T-cell (primary cell): ENCODE measurements at regions of chr9 and their contacts with region 1.

Region 1: DNA sequence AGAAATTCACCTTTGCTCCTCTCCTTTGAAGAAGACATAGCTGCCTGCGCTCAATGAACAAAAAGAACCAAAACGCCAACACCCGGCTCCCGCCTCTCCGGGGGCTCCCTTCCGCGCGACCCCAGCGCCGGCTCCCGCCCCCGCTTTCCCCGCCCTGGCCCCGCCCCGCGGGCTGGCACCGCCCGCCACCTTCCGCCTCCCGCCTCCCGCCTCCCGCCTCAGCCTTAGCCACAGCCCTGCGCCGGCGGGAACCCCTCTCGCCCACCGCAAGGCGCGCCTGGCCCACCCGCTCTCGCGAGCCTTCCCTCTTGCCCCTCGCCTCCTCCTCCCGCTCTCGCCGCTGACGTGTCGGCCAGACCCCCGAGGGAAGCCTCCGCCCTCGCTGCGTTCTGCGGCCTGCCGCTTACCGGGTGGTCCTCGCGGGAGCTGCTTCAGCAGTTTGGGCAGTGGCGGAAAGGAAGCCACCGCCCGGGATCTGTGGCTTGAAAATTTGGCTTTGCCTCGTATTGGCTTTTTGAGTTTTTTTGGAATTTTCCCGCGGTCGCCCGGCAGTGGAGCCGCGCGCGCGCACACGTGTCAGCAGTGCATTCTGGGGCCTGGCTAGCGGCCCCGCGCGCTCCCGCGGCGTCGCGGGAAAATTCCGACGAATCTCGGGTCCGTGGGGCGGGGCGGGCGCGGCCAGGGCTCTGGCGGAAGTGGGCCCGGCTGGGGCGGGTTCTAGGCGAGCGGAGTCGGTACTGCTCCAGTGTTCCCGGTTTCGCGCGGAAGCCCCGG is at the start of gene FANCC:
- DNase-seq: peak; percentile 65 to 91 (median 78)
- ATAC-seq: peak; percentile 89 to 93 (median 90)
- H3K4me3 ChIP-seq: peak within 1 kb of the TSS; percentile 77 to 99
- H3K4me3 Mint-ChIP-seq: peak within 1 kb of the TSS; percentile 92 to 93 (median 93)
- H3K27ac ChIP-seq: peak within 1 kb of the TSS; percentile 68
- H3K27ac Mint-ChIP-seq: peak within 1 kb of the TSS; percentile 85 to 90
- H3K4me1 ChIP-seq: peaks cover 0 to 12% of the 10 kb centered on the region in 2 experiments
- H3K4me1 Mint-ChIP-seq: peaks cover 17 to 29% (median 19%) of the 10 kb centered on the region in 3 donors
- H3K27me3 ChIP-seq: peaks cover 0 to 8% of the 10 kb centered on the region in 2 experiments
- H3K27me3 Mint-ChIP-seq: peaks cover 6 to 11% of the 10 kb centered on the region in 2 donors
- total RNA-seq, gene FANCC: 4.2 to 11.6 (median 4.8) TPM

Region 2: DNA sequence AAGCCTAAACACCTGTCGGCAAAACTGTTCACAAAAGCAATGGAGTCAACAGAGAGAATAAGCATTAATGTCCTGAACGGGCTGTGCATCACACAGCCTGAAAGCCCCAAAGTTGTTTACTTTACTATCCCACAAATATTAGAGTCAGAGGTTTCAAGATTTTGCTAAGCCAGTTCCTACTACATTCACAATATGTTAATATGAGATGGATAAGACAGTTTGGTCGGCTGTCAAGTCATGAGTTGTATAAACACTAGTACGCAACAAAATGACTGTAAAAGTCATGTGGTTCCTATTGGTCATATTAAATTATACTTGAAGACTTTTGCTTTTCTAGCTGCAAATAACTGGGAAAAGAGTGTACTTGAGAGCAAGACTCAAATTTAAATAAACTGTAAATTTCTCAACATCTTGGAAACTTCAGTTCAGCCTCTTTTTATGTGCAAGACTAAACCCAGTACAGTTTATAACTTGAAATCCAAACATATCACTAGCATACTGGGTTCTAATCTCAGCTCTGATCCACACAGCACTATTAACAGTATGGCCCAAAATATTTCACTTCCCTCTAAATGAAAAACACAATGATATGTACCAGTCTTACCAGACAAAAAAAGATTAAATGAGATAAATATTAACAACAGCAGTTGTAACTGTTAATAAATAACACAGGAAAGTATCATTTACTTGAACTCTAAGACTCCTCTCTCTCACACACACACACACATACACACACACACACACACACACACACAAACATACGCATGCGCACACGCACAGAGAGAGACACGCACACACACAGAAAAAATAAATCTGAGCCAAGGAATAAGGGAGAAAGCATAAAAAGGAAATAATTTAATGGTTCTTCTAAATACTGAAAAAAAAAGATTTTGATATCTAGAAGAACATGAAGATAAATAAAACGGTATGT is 32.9 kb before region 1 on chr9:
- CTCF ChIA-PET with region 1: no interaction called
- POLR2A ChIA-PET with region 1: no interaction called
- DNase-seq: no peak
- ATAC-seq: no peak
- H3K4me3 ChIP-seq: no peak overlapping the region
- H3K4me3 Mint-ChIP-seq: no peak overlapping the region
- H3K27ac ChIP-seq: no peak overlapping the region
- H3K27ac Mint-ChIP-seq: no peak overlapping the region
- H3K4me1 ChIP-seq: no peaks in the 10 kb centered on the region
- H3K4me1 Mint-ChIP-seq: peaks cover 4 to 11% (median 4%) of the 10 kb centered on the region in 3 donors
- H3K27me3 ChIP-seq: no peaks in the 10 kb centered on the region
- H3K27me3 Mint-ChIP-seq: no peaks in the 10 kb centered on the region

Region 3: GRCh38 chr9:95399261-95399660 is 82.0 kb after region 1 on chr9:
- CTCF ChIA-PET with region 1: no interaction called
- POLR2A ChIA-PET with region 1: no interaction called
- DNase-seq: no peak
- ATAC-seq: no peak
- H3K4me3 ChIP-seq: no peak overlapping the region
- H3K4me3 Mint-ChIP-seq: no peak overlapping the region
- H3K27ac ChIP-seq: no peak overlapping the region
- H3K27ac Mint-ChIP-seq: no peak overlapping the region
- H3K4me1 ChIP-seq: no peaks in the 10 kb centered on the region
- H3K4me1 Mint-ChIP-seq: no peaks in the 10 kb centered on the region
- H3K27me3 ChIP-seq: peaks cover 0 to 6% of the 10 kb centered on the region in 2 experiments
- H3K27me3 Mint-ChIP-seq: peaks cover 3 to 14% of the 10 kb centered on the region in 2 donors

Region 4: GRCh38 chr9:96478829-96479371 is 1161.6 kb after region 1 on chr9:
- CTCF ChIA-PET with region 1: interaction called in 1 of 2 experiments, 11 read pairs
- POLR2A ChIA-PET with region 1: no interaction called
- DNase-seq: no peak
- ATAC-seq: no peak
- H3K4me3 ChIP-seq: no peak overlapping the region
- H3K4me3 Mint-ChIP-seq: no peak overlapping the region
- H3K27ac ChIP-seq: no peak overlapping the region
- H3K27ac Mint-ChIP-seq: peak overlapping the region in 1 of 2 donors; percentile 19
- H3K4me1 ChIP-seq: no peaks in the 10 kb centered on the region
- H3K4me1 Mint-ChIP-seq: peaks cover 0 to 22% (median 14%) of the 10 kb centered on the region in 3 donors
- H3K27me3 ChIP-seq: no peaks in the 10 kb centered on the region
- H3K27me3 Mint-ChIP-seq: no peaks in the 10 kb centered on the region